ENCODE measurements at regions of chr12 and their contacts with region 1.

Region 1: GRCh38 chr12:54324617-54325441 is at the start of gene COPZ1:
- DNase-seq: peak; percentile 88 to 98
- ATAC-seq: peak; percentile 98 to 99 (median 98)
- H3K4me3 ChIP-seq: peak within 1 kb of the TSS; percentile 70 to 90 (median 81)
- H3K27ac ChIP-seq: peak within 1 kb of the TSS; percentile 56 to 95 (median 83)
- H3K4me1 ChIP-seq: peaks cover 3 to 51% (median 39%) of the 10 kb centered on the region in 9 donors
- H3K27me3 ChIP-seq: no peaks in the 10 kb centered on the region
- CTCF ChIP-seq: peak; percentile 49 to 88 (median 81)
- total RNA-seq, gene COPZ1: 111 to 143 (median 131) TPM

Region 2: GRCh38 chr12:54214553-54215406 is 110.0 kb before region 1 on chr12:
- intact Hi-C with region 1: loop called in 2 of 10 experiments (anchors 5 to 10 kb)
- DNase-seq: peak; percentile 82 to 87
- ATAC-seq: peak; percentile 79 to 92 (median 88)
- H3K4me3 ChIP-seq: peak overlapping the region in 7 of 10 donors; percentile 7 to 36 (median 23)
- H3K27ac ChIP-seq: no peak overlapping the region
- H3K4me1 ChIP-seq: peaks cover 2 to 40% (median 24%) of the 10 kb centered on the region in 9 donors
- H3K27me3 ChIP-seq: peaks cover 0 to 85% (median 37%) of the 10 kb centered on the region in 7 donors
- CTCF ChIP-seq: peak; percentile 91 to 100 (median 98)

Region 3: DNA sequence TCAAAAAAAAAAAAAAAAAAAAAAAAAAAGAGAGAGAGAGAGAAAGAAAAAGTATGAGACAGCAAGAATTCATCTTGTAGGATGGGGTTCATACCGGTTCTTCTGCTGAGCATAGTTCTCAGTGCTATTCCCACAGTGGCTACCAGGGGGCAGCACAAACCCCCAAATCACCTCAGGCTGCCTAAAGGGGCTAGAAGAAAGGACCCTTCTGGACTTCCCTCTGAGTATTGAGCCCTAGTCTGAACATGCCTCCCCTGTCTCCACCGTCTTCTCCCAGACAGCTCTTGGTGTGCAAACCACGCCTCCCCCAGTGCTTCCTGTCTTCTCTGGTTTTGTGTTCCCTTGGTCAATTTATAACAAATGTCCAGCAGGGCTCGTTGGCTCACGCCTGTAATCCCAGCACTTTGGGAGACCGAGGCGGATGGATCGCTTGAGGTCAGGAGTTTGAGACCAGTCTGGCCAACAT is 104.7 kb before region 1 on chr12:
- intact Hi-C with region 1: loop called in 3 of 10 experiments (anchors 5 to 10 kb)
- DNase-seq: peak; percentile 54 to 64
- ATAC-seq: peak; percentile 14 to 77 (median 55)
- H3K4me3 ChIP-seq: no peak overlapping the region
- H3K27ac ChIP-seq: no peak overlapping the region
- H3K4me1 ChIP-seq: peaks cover 0 to 38% (median 24%) of the 10 kb centered on the region in 9 donors
- H3K27me3 ChIP-seq: peaks cover 0 to 36% (median 9%) of the 10 kb centered on the region in 7 donors
- CTCF ChIP-seq: peak; percentile 59 to 82 (median 76)

Region 4: GRCh38 chr12:54279866-54280467 is 44.9 kb before region 1 on chr12 and contains the start of gene CBX5:
- intact Hi-C with region 1: loop called in 3 of 10 experiments (anchors 2 to 5 kb)
- DNase-seq: peak; percentile 98 to 100
- ATAC-seq: peak; percentile 76 to 91 (median 82)
- H3K4me3 ChIP-seq: peak within 1 kb of the TSS; percentile 50 to 88 (median 74)
- H3K27ac ChIP-seq: peak within 1 kb of the TSS; percentile 84 to 95 (median 92)
- H3K4me1 ChIP-seq: peaks cover 12 to 63% (median 52%) of the 10 kb centered on the region in 9 donors
- H3K27me3 ChIP-seq: no peaks in the 10 kb centered on the region
- CTCF ChIP-seq: no peak
- total RNA-seq, gene CBX5: 44.4 to 53.5 (median 49.7) TPM

Region 5: DNA sequence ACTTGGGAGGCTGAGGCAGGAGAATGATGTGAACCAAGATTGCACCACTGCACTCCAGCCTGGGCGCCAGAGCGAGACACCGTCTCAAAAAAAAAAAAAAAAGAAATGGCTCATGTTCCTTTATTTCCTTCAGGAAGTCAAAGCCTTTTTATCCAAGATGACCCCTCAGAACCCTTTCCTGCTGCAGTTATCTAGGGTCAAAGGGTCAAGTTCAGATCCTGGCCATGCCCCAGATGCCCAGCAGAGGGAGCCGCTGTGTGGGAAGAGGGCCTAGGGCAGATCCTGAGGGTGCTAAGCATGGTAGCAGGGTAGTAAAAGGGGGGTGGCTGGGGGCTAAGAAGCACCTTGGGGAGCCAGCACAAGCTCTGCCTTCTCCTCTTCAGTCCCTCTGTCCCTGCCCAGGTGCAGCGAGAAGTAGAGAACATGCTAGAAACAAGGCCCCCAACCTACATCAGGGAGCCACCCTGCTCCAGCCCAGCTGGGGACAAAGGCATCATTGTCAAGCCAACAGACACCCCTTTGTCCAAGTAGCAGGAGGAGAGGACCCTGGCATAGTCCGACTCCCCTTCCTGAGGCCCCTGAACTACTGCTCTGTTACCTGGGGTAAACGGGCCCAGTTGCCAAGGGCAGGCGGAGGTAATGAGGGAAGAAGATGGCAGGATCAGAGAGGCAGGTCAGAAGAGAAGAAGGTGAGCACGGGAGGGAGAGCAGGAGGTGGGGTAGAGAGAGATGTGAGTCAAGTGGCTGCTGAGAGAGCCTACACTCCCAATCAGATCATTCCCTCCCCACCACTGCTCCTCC is 30.5 kb before region 1 on chr12:
- intact Hi-C with region 1: loop called in 1 of 10 experiments (anchors 5 kb)
- DNase-seq: peak in 1 of 2 donors; percentile 58
- ATAC-seq: peak in 7 of 8 donors; percentile 32 to 70 (median 59)
- H3K4me3 ChIP-seq: peak overlapping the region in 1 of 10 donors; percentile 20
- H3K27ac ChIP-seq: peak overlapping the region in 1 of 10 donors; percentile 38
- H3K4me1 ChIP-seq: peaks cover 0 to 8% (median 0%) of the 10 kb centered on the region in 9 donors
- H3K27me3 ChIP-seq: peaks cover 4 to 13% (median 9%) of the 10 kb centered on the region in 7 donors
- CTCF ChIP-seq: peak in 8 of 9 donors; percentile 10 to 75 (median 63)

Region 6: DNA sequence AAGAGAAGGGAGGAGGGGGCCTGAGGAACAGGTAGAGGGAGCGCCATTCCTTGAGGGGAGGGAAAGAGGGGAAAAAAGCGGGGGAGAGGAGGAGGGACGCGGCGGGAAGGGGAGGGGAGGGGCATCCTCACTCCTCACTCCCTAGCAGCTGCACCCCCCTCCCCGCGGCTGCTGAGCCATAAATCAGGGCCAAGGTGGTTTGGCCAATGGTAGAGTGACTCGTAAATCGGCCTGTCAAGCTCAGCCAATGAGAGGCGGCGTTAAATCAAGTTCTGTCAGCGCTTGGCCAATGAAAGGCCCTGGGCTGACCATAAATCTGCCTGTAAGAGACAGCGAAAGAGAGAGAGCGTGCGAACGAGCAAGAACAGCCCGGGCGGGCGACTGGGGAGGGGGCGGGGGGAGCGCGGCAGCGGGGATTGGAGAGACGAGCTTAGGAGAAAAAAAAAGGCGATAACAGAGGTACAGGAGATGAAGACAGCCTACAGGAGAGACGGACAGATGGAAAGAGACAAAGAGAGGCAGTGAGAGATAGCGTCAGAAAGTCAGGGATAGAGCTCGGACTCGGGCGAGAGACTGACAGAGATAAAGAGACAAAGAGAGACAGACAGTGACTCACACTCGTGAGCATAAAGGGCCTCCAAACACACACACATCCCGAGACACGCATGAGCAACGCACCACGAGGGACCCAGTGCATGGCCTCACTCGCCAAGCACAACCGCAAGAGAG is 34.4 kb after region 1 on chr12:
- intact Hi-C with region 1: loop called in 1 of 10 experiments (anchors 5 kb)
- DNase-seq: peak; percentile 90 to 98
- ATAC-seq: peak; percentile 96 to 98 (median 97)
- H3K4me3 ChIP-seq: peak overlapping the region; percentile 34 to 76 (median 64)
- H3K27ac ChIP-seq: peak overlapping the region; percentile 67 to 95 (median 88)
- H3K4me1 ChIP-seq: peaks cover 4 to 44% (median 17%) of the 10 kb centered on the region in 9 donors
- H3K27me3 ChIP-seq: no peaks in the 10 kb centered on the region
- CTCF ChIP-seq: no peak

Region 7: DNA sequence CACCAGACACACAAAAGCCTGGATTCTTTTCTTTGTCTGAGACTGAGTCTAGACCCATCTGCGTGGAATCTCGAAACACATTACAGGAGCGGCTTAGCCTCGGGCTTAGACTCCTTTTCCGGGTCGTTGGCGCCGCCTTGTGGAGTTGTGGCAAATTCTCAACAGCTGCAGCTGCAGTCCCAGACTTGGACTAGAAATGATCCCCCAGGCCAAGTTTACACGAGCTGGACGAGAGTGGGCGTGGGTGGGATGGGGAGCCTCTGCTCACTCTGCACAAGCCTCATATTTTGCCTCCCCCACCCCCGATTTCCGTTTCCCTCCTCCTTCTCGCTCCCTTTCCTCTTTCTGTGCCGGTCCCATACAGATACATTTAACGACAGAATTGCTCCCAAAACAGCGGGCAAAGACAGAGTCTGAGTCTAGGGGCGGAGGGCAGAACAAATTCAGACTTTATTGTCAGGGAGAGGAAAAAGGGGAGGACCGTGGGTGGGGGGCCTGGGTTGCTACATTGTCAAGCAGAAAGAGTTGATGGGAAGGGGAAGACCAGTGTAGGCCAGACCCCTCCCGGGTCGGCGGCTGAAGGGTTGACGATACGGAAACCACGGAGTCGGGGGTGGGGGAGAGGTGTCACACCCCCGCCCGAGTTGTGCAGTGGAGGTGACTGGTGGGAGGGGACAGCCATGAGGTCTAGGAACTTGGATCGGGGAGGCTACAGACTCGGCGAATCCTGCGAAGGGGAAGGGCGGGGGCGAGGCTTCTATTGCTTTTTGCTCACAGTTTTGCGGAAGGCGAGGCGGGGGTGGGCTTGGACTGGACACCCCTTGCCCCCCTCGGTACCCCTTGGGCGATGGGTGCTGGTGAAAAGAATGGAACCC is 44.1 kb after region 1 on chr12:
- intact Hi-C with region 1: loop called in 2 of 10 experiments (anchors 5 kb)
- DNase-seq: peak; percentile 91 to 93
- ATAC-seq: peak; percentile 59 to 85 (median 71)
- H3K4me3 ChIP-seq: peak overlapping the region; percentile 18 to 60 (median 48)
- H3K27ac ChIP-seq: peak overlapping the region in 8 of 10 donors; percentile 62 to 86 (median 76)
- H3K4me1 ChIP-seq: peaks cover 11 to 74% (median 47%) of the 10 kb centered on the region in 9 donors
- H3K27me3 ChIP-seq: no peaks in the 10 kb centered on the region
- CTCF ChIP-seq: peak; percentile 62 to 90 (median 83)

Region 8: GRCh38 chr12:54658306-54659264 is 333.8 kb after region 1 on chr12:
- intact Hi-C with region 1: no loop called
- DNase-seq: no peak
- ATAC-seq: no peak
- H3K4me3 ChIP-seq: no peak overlapping the region
- H3K27ac ChIP-seq: no peak overlapping the region
- H3K4me1 ChIP-seq: no peaks in the 10 kb centered on the region
- H3K27me3 ChIP-seq: peaks cover 0 to 25% (median 19%) of the 10 kb centered on the region in 7 donors
- CTCF ChIP-seq: peak in 6 of 9 donors; percentile 21 to 60 (median 31)

Measured in heart right ventricle (tissue), 16 donors.